SK-N-SH (cell line): ENCODE measurements at regions of chr16 and their contacts with region 1.

Region 1: DNA sequence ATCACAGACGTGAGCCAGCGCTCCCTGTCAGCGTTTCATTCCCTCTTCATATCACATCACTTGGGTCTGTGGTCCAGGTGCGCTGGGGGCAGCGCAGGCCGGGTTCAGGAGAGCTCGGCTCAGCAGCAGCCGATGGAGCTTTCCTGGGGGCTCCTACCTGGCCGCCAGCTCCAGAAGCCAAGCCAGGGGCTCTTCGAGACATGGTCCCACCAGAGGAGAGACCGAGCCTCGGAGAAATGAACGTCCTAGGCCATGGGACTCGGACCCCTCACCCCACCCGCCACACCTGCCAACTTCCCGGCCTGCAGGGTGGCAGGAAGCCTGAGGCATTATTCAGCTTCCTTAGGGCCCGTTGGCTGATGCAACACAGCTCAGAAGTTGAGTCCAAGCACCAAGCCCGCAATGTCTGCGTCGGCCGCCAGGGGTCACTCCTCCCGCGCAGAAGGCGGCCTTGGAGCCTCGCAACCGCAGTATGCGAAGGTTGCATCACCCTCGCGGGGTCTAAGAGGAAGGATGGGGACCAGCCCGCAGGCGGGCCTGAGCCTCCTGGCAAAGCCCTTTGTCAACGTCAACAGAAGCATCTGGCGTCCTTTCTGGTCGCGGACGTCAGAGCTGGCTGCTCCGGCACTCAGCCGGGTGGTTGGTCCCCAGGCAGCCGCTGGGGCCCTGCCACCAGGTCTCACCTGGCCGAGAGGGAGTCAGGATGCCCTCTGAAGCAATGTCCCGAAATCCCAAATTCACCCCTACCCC is 13.2 kb upstream of the KLHDC4 start:
- DNase-seq: peak; percentile 88
- H3K4me3 ChIP-seq: no peak overlapping the region
- H3K27ac ChIP-seq: peak overlapping the region; percentile 64 to 70
- H3K4me1 ChIP-seq: peaks cover 16 to 22% of the 10 kb centered on the region in 2 experiments; a peak in 2 of 4 replicates
- H3K27me3 ChIP-seq: no peaks in the 10 kb centered on the region
- CTCF ChIP-seq: peak; percentile 82
- EP300 ChIP-seq: peak in 1 of 2 experiments; percentile 60; a peak in 1 of 4 replicates
- RAD21 ChIP-seq: peak; percentile 97

Region 2: GRCh38 chr16:87790278-87791032 is 11.4 kb after region 1 on chr16:
- CTCF ChIA-PET with region 1: interaction called, 48 read pairs
- POLR2A ChIA-PET with region 1: no interaction called
- DNase-seq: peak; percentile 70
- H3K4me3 ChIP-seq: no peak overlapping the region
- H3K27ac ChIP-seq: no peak overlapping the region
- H3K4me1 ChIP-seq: peaks cover 0 to 2% of the 10 kb centered on the region in 2 experiments; a peak in 1 of 4 replicates
- H3K27me3 ChIP-seq: no peaks in the 10 kb centered on the region
- CTCF ChIP-seq: no peak
- EP300 ChIP-seq: no peak
- RAD21 ChIP-seq: no peak

Region 3: GRCh38 chr16:87828071-87828971 is 49.3 kb after region 1 on chr16:
- CTCF ChIA-PET with region 1: interaction called, 77 read pairs
- POLR2A ChIA-PET with region 1: no interaction called
- DNase-seq: no peak
- H3K4me3 ChIP-seq: no peak overlapping the region
- H3K27ac ChIP-seq: no peak overlapping the region
- H3K4me1 ChIP-seq: no peaks in the 10 kb centered on the region
- H3K27me3 ChIP-seq: no peaks in the 10 kb centered on the region
- CTCF ChIP-seq: no peak
- EP300 ChIP-seq: no peak
- RAD21 ChIP-seq: no peak

Region 4: DNA sequence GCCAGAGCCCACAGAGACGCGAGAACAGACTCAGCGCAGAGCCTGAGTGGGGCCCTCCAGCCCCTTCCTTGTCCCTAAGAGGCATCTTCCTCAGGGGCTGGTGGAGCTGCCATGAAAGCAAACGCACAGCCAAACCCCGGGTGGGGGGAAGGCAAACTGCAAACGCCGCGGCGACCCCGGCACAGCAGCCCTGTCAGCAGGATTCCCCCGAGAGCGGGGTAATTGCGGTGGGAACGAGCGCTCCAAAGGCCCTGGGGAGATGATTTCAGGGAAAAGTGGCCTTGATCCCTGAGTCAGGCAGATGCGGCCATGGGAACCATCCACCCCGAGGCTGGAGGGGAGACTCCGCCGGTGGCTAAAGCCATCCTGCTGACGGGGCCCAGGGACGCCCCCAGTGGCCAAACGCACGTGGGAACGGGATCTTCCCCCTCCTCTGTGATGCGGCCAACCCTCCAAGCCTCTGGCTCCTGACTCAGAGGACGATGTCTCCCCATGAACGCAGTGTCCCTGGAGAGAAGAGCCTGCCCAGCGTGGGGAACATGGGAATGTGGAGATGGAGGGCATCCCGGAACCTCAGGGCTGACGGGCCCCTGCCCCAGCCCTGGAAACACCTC is 65.2 kb after region 1 on chr16:
- CTCF ChIA-PET with region 1: interaction called, 78 read pairs
- POLR2A ChIA-PET with region 1: no interaction called
- DNase-seq: no peak
- H3K4me3 ChIP-seq: no peak overlapping the region
- H3K27ac ChIP-seq: no peak overlapping the region
- H3K4me1 ChIP-seq: peaks cover 0 to 20% of the 10 kb centered on the region in 2 experiments; a peak in 1 of 4 replicates
- H3K27me3 ChIP-seq: no peaks in the 10 kb centered on the region
- CTCF ChIP-seq: no peak
- EP300 ChIP-seq: no peak
- RAD21 ChIP-seq: no peak

Region 5: GRCh38 chr16:87860553-87861299 is 81.7 kb after region 1 on chr16:
- CTCF ChIA-PET with region 1: interaction called, 21 read pairs
- POLR2A ChIA-PET with region 1: no interaction called
- DNase-seq: peak; percentile 30
- H3K4me3 ChIP-seq: no peak overlapping the region
- H3K27ac ChIP-seq: no peak overlapping the region; a peak in 1 of 4 replicates
- H3K4me1 ChIP-seq: peaks cover 18 to 34% of the 10 kb centered on the region in 2 experiments; a peak in 2 of 4 replicates
- H3K27me3 ChIP-seq: no peaks in the 10 kb centered on the region
- CTCF ChIP-seq: no peak
- EP300 ChIP-seq: no peak
- RAD21 ChIP-seq: no peak

Region 6: GRCh38 chr16:87895641-87896141 is 116.7 kb after region 1 on chr16:
- CTCF ChIA-PET with region 1: interaction called, 16 read pairs
- POLR2A ChIA-PET with region 1: no interaction called
- DNase-seq: no peak
- H3K4me3 ChIP-seq: no peak overlapping the region
- H3K27ac ChIP-seq: no peak overlapping the region
- H3K4me1 ChIP-seq: no peaks in the 10 kb centered on the region; a peak in 1 of 4 replicates
- H3K27me3 ChIP-seq: no peaks in the 10 kb centered on the region
- CTCF ChIP-seq: no peak
- EP300 ChIP-seq: no peak
- RAD21 ChIP-seq: no peak

Region 7: DNA sequence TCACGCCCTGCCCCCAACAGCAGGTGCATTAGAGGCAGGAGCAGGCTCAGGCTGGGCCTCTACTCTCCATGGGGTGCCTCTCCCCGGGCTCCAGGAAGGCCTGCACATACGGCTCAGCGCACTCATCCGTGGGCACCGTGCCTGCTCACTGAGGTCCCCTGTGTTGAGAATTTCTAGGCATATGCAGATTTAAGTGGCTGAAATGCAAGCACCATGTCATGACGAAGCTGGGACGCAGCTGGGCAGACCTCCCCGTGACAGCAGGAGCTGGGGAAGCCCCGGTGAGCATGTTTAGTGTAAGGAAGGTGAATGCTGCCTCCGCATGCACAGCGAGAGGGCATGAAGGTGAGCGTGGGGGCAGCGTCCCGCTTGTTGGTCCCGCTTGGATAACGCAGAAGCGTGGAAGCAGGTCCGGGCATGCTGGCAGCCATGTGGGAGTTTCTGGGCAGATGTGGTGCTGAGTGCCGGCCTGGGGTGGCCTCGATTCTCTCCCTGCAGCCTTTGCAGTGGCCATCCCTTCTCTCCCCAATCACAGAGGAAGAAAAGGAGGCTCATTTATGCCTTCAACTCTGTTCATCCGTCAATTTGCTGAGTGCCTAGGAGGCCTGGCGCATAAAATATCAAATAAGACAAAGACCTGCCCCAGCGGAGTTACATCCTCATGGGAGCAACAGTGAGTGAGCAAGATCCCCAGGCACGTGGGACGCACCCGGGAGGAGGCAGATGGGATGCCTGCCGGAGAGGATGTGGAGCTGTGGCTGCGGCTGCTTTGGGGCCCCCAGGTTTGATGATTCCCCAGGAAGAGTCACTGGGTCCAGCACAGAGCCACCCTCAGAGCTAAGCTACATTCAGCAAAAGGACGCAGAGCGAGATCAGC is 145.7 kb after region 1 on chr16:
- CTCF ChIA-PET with region 1: interaction called, 14 read pairs
- POLR2A ChIA-PET with region 1: no interaction called
- DNase-seq: no peak
- H3K4me3 ChIP-seq: no peak overlapping the region
- H3K27ac ChIP-seq: no peak overlapping the region
- H3K4me1 ChIP-seq: peaks cover 0 to 14% of the 10 kb centered on the region in 2 experiments; a peak in 2 of 4 replicates
- H3K27me3 ChIP-seq: no peaks in the 10 kb centered on the region; the same call in 1 of the 2 replicates
- CTCF ChIP-seq: no peak
- EP300 ChIP-seq: no peak
- RAD21 ChIP-seq: no peak

Region 8: GRCh38 chr16:87982491-87983415 is 203.7 kb after region 1 on chr16:
- CTCF ChIA-PET with region 1: no interaction called
- POLR2A ChIA-PET with region 1: no interaction called
- DNase-seq: no peak
- H3K4me3 ChIP-seq: no peak overlapping the region
- H3K27ac ChIP-seq: no peak overlapping the region; a peak in 1 of 4 replicates
- H3K4me1 ChIP-seq: peaks cover 0 to 4% of the 10 kb centered on the region in 2 experiments; a peak in 1 of 4 replicates
- H3K27me3 ChIP-seq: no peaks in the 10 kb centered on the region
- CTCF ChIP-seq: no peak
- EP300 ChIP-seq: no peak
- RAD21 ChIP-seq: no peak